ENCODE measurements at regions of chr3 and their contacts with region 1.

Region 1: DNA sequence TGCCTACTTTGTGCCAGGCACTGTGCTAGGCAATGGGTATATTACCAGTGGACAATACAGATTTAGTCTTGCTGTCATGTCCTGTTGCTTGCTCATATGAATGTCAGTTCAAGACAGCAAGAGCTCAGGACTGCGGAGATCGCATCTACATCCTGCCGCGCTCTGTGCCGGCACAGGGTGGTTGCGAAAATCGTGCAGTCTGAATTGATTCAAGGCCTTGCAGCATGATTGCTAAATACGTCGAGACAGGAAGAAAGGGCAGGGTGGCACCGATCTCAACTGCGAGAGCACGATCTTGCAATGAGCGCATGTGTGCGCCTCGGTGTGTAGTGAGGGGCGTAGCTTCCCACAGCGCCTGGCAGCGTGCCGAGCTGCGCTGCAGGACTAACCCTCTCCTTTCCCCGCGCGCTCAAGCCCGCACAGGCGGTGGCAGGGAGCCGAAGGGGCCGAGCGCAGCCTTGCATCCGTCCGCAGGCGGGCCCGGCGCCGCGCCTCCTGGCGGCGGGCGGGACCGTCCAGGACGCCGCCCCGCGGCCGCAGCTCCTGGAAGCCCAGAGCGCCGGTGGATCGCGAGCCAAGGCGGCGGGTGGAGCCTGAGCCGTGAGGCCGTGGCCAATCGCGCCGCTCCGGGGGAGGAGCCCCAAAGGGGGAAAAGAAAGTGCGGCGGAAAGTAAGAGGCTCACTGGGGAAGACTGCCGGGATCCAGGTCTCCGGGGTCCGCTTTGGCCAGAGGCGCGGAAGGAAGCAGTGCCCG is at the start of gene IL1RAP:
- DNase-seq: peak; percentile 88 to 96
- H3K4me3 ChIP-seq: peak within 1 kb of the TSS; percentile 80
- H3K27ac ChIP-seq: peak within 1 kb of the TSS; percentile 41
- H3K4me1 ChIP-seq: peaks cover 27% of the 10 kb centered on the region
- H3K27me3 ChIP-seq: no peaks in the 10 kb centered on the region
- CTCF ChIP-seq: no peak; the same call in none of the 2 replicates
- total RNA-seq, gene IL1RAP: 8.4 and 13.3 TPM in 2 replicates

Region 2: DNA sequence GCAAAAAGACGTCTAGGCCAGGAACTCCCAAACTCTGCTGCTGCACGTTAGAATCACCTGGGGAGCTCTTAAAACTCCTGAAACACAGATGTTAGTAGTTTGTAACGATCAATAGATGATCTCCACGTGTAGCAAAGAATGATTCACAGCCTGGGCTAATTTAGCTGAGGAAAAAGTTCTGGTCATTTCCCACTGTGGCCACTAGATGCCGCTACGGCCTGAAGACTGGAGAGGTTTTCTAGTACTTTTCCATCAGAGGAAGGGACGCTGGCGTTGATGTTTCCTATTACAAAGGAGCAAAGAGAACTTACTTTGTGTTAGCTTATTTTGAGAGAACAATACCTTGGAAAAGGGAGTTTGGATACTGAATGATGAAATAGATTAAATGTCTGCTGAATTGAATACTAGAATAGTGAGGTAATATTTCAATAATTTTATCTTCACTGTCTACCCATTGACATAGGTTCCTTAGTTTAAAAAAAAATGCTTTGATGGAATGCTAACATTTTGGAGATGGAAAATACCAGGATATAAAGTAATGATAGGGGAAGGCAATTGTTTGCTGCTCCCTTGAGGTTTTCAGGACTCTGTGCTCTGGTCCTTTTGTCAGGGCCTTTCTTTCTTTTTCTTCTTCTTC is 551.9 kb before region 1 on chr3:
- CTCF ChIA-PET with region 1: no interaction called
- POLR2A ChIA-PET with region 1: interaction called, 16 read pairs
- intact Hi-C with region 1: loop called (anchors 10 kb)
- DNase-seq: peak; percentile 79 to 85
- H3K4me3 ChIP-seq: no peak overlapping the region
- H3K27ac ChIP-seq: no peak overlapping the region
- H3K4me1 ChIP-seq: peaks cover 7% of the 10 kb centered on the region
- H3K27me3 ChIP-seq: no peaks in the 10 kb centered on the region
- CTCF ChIP-seq: peak; percentile 100

Region 3: DNA sequence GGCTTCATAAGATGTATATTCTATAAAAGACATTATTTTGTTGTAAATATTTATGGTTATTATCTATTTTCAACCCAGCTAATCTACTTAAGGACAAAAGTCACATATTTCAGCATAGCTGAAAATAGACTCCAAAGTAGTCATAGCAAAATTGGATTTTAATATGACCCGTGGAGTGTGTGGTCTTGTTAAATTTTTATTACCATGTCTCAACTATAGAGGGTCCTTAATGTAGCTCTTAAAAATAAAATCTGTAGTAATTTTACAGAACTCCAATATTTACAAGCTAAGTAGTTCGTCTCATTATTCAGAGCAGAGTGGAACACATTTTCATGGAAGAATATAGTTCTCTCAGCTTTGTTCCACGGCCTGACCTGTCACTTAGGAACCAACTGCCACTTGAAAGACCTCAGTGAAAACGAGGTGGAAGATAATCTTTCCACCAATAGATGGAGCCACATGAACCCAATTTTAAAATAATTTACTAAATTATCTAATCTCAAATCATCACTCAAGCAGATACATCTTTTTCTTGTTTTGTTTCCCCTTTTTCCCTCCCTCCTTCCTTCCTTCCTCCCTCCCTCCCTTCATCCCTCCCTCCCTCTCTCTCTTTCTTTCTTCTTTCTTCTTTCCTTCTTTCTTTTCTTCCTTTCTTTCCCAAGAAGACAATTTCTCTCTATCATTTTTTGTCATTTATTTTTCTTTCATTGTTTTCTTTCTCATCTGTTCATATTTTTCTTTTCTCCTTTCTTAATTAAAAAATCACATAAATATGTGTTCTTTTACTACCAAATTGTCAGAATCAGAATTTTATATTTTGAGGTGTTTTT is 288.5 kb before region 1 on chr3:
- CTCF ChIA-PET with region 1: no interaction called
- POLR2A ChIA-PET with region 1: no interaction called
- intact Hi-C with region 1: loop called (anchors 1 kb)
- DNase-seq: peak in 1 of 2 experiments; percentile 12
- H3K4me3 ChIP-seq: no peak overlapping the region
- H3K27ac ChIP-seq: no peak overlapping the region
- H3K4me1 ChIP-seq: peaks cover 12% of the 10 kb centered on the region
- H3K27me3 ChIP-seq: no peaks in the 10 kb centered on the region
- CTCF ChIP-seq: peak; percentile 74

Region 4: DNA sequence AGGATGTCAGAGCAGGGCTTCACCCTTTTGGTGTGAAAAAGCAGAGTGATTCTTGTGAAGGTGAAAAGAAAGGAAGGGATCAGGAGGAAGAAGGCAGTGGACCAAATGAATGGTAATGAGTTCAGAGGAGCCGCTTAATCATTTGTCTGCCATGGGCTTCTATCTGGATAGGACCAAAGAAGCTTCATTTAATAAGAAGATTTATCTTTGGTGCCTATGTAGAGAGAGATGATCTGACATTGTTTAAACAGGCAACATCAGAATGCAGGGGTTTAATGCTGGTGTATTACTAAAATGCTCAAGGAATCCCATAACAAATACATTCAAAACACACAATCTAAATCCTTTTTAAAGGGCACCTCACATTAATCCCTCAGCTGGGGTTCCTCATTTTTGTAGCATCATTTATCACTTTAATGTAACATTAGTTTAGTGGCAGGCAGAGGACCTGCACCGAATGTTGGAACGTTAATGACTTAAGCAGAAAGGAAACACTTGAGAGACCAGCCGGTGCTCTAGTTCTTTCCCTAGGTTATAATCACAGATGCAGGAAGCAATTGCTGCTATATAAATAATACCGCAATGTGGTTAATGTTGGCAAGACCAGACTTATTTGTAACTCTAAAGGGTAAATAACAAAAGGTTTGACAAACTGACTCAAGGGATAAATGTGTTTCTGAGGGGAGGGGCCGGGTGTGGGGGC is 27.6 kb before region 1 on chr3:
- CTCF ChIA-PET with region 1: interaction called, 16 read pairs
- POLR2A ChIA-PET with region 1: no interaction called
- intact Hi-C with region 1: no loop called
- DNase-seq: no peak
- H3K4me3 ChIP-seq: no peak overlapping the region
- H3K27ac ChIP-seq: no peak overlapping the region
- H3K4me1 ChIP-seq: no peaks in the 10 kb centered on the region
- H3K27me3 ChIP-seq: no peaks in the 10 kb centered on the region
- CTCF ChIP-seq: no peak

Region 5: GRCh38 chr3:190533511-190534277 is 20.1 kb after region 1 on chr3:
- CTCF ChIA-PET with region 1: interaction called, 15 read pairs
- POLR2A ChIA-PET with region 1: interaction called, 5 read pairs
- intact Hi-C with region 1: loop called (anchors 1 kb)
- DNase-seq: peak in 1 of 2 experiments; percentile 79
- H3K4me3 ChIP-seq: no peak overlapping the region
- H3K27ac ChIP-seq: no peak overlapping the region
- H3K4me1 ChIP-seq: no peaks in the 10 kb centered on the region
- H3K27me3 ChIP-seq: no peaks in the 10 kb centered on the region
- CTCF ChIP-seq: no peak

Region 6: GRCh38 chr3:190566043-190566933 is 52.7 kb after region 1 on chr3:
- CTCF ChIA-PET with region 1: interaction called, 9 read pairs
- POLR2A ChIA-PET with region 1: interaction called, 3 read pairs
- intact Hi-C with region 1: loop called (anchors 1 kb)
- DNase-seq: peak; percentile 94 to 100
- H3K4me3 ChIP-seq: no peak overlapping the region
- H3K27ac ChIP-seq: peak overlapping the region; percentile 82
- H3K4me1 ChIP-seq: peaks cover 33% of the 10 kb centered on the region
- H3K27me3 ChIP-seq: no peaks in the 10 kb centered on the region
- CTCF ChIP-seq: no peak

Region 7: GRCh38 chr3:190585805-190586630 is 72.4 kb after region 1 on chr3:
- CTCF ChIA-PET with region 1: no interaction called
- POLR2A ChIA-PET with region 1: interaction called, 9 read pairs
- intact Hi-C with region 1: loop called (anchors 2 kb)
- DNase-seq: peak; percentile 80 to 86
- H3K4me3 ChIP-seq: no peak overlapping the region
- H3K27ac ChIP-seq: peak overlapping the region; percentile 57
- H3K4me1 ChIP-seq: peaks cover 22% of the 10 kb centered on the region
- H3K27me3 ChIP-seq: no peaks in the 10 kb centered on the region
- CTCF ChIP-seq: no peak

Measured in PC-9 (cell line).